Cardiac septum (tissue), 1 donor: ENCODE measurements at regions of chr12 and their contacts with region 1.

Region 1: DNA sequence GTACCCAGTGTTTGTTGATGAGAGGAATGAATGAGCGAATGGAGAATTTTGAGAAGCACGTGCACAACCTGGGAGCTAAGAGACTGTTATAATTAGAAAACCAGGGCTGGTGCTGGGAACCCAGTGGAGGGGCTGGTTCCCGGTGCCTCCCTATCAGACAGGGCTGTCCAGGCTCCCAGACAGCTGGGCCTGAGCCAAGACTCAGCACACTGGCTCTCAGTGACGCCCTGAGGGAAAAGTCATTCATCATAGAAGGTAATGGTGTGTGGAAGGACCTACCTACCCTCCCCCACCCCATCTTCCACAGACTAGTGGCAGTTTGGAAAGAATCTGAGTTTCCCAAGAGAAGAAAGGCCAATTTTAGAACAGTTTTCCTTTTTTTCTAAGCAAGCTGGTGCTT is 34.7 kb downstream of the KCNA5 start:
- DNase-seq: peak; percentile 90

Region 2: DNA sequence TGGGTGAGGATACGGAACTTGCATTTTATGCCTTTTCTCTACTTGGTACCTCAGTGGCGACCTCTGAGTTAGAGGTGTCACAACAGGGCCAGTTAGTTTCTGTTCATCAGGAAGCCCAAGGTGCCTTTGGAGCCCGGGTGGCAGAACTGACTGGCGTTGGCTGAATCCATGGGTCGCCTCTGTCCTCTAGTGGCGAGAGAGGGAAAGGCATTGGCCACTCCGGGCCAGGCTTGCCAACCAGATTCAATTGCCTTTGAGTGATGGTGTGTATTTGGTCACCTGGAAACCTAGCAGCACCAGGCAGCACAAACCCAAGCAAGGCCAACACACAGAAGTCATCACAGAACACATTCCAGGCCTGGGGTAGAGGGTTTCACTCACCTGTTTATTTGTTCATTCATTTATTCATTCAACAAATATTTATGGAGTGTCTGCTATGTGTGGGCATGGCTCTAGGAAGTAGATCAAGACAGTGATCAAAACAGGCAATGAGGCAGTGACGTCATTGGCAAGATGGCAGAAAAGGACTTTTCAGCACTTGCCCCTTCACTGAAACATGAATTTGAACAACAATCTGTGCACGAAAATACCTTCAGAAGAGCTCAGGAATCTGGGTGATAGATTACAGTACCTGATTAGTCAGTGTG is 75.3 kb before region 1 on chr12:
- intact Hi-C with region 1: no loop called
- DNase-seq: peak; percentile 79

Region 3: GRCh38 chr12:5034603-5035002 is 43.8 kb before region 1 on chr12:
- intact Hi-C with region 1: loop called (anchors 5 kb)
- DNase-seq: no peak